Right ventricle myocardium inferior (tissue), 1 donor: ENCODE measurements at regions of chr7 and their contacts with region 1.

Region 1: GRCh38 chr7:38222481-38223096 is 44.5 kb downstream of the STARD3NL start:
- DNase-seq: no peak
- ATAC-seq: peak; percentile 69

Region 2: GRCh38 chr7:37901236-37901827 is 321.3 kb before region 1 on chr7:
- intact Hi-C with region 1: loop called (anchors 5 kb)
- DNase-seq: no peak
- ATAC-seq: peak; percentile 50